ENCODE measurements at regions of chr3 and their contacts with region 1.

Region 1: DNA sequence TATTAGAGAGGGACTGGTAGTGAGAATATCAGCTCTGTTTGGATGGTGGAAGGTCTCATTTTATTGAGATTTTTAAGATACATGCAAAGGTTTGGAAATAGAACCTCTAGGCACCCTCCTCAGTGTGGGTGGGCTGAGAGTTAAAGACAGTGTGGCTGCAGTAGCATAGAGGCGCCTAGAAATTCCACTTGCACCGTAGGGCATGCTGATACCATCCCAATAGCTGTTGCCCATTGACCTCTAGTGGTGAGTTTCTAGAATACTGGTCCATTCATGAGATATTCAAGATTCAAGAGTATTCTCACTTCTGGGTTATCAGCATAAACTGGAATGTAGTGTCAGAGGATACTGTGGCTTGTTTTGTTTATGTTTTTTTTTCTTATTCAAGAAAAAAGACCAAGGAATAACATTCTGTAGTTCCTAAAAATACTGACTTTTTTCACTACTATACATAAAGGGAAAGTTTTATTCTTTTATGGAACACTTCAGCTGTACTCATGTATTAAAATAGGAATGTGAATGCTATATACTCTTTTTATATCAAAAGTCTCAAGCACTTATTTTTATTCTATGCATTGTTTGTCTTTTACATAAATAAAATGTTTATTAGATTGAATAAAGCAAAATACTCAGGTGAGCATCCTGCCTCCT is 87.2 kb downstream of the TGFBR2 start:
- DNase-seq: peak; percentile 16
- ATAC-seq: peak; percentile 98
- H3K4me3 ChIP-seq: no peak overlapping the region
- H3K27ac ChIP-seq: no peak overlapping the region
- H3K4me1 ChIP-seq: no peaks in the 10 kb centered on the region
- H3K27me3 ChIP-seq: no peaks in the 10 kb centered on the region; a peak in 1 of 4 replicates
- CTCF ChIP-seq: peak; percentile 72 to 84 (median 79)
- EP300 ChIP-seq: no peak
- POLR2A ChIP-seq: no peak
- RAD21 ChIP-seq: peak; percentile 98

Region 2: DNA sequence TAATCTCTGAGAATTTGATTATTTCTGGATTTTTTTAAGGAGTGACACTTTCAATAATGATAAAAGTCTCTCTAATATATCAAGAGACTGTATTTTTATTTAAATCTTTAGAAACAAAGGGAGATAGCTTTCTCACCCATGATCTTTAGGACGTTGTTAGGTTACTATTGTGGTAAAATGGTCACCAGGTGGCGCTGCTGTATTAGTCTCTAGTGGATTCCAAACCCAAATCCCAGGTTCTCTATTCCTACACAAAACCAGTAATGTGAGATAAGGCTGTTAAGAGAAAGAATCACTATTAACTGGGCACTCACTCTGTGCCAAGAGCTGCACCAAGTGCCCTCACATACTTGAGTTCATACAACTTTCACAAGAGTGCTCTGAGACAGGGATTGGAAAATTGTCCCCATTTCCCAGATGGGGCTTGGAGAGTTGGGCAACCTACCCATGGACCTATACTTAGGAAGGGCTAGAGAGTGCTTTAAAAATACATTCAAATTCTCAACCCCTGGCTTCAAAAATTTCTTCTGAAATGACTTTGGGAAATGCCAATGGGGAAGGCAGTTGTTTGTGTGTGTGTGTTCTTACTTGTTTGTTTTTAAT is 680.6 kb before region 1 on chr3:
- CTCF ChIA-PET with region 1: interaction called, 6 read pairs
- POLR2A ChIA-PET with region 1: no interaction called
- RAD21 ChIA-PET with region 1: interaction called, 11 read pairs
- SMC1A ChIA-PET with region 1: interaction called, 3 read pairs
- in situ Hi-C with region 1: no loop called
- intact Hi-C with region 1: no loop called
- DNase-seq: peak; percentile 8
- ATAC-seq: peak; percentile 69
- H3K4me3 ChIP-seq: no peak overlapping the region
- H3K27ac ChIP-seq: no peak overlapping the region
- H3K4me1 ChIP-seq: no peaks in the 10 kb centered on the region
- H3K27me3 ChIP-seq: no peaks in the 10 kb centered on the region
- CTCF ChIP-seq: peak; percentile 48 to 61 (median 48)
- EP300 ChIP-seq: no peak
- POLR2A ChIP-seq: no peak
- RAD21 ChIP-seq: peak; percentile 54

Region 3: GRCh38 chr3:30042274-30042859 is 651.2 kb before region 1 on chr3:
- CTCF ChIA-PET with region 1: interaction called, 14 read pairs
- POLR2A ChIA-PET with region 1: no interaction called
- RAD21 ChIA-PET with region 1: interaction called, 11 read pairs
- SMC1A ChIA-PET with region 1: interaction called, 27 read pairs
- in situ Hi-C with region 1: no loop called
- intact Hi-C with region 1: loop called (anchors 1 kb)
- DNase-seq: peak; percentile 1
- ATAC-seq: peak; percentile 88
- H3K4me3 ChIP-seq: no peak overlapping the region
- H3K27ac ChIP-seq: no peak overlapping the region
- H3K4me1 ChIP-seq: no peaks in the 10 kb centered on the region
- H3K27me3 ChIP-seq: no peaks in the 10 kb centered on the region
- CTCF ChIP-seq: peak; percentile 57 to 68 (median 59); a peak in 5 of 6 replicates
- EP300 ChIP-seq: no peak
- POLR2A ChIP-seq: no peak
- RAD21 ChIP-seq: peak; percentile 71

Region 4: GRCh38 chr3:30112902-30113484 is 580.6 kb before region 1 on chr3:
- CTCF ChIA-PET with region 1: interaction called, 11 read pairs
- POLR2A ChIA-PET with region 1: no interaction called
- RAD21 ChIA-PET with region 1: no interaction called
- SMC1A ChIA-PET with region 1: interaction called, 4 read pairs
- in situ Hi-C with region 1: loop called (anchors 10 kb)
- intact Hi-C with region 1: loop called (anchors 1 kb)
- DNase-seq: no peak
- ATAC-seq: peak; percentile 52; the same call in 1 of the 3 replicates
- H3K4me3 ChIP-seq: no peak overlapping the region
- H3K27ac ChIP-seq: no peak overlapping the region
- H3K4me1 ChIP-seq: no peaks in the 10 kb centered on the region
- H3K27me3 ChIP-seq: no peaks in the 10 kb centered on the region
- CTCF ChIP-seq: peak; percentile 16 to 44 (median 39); a peak in 3 of 6 replicates
- EP300 ChIP-seq: no peak
- POLR2A ChIP-seq: no peak
- RAD21 ChIP-seq: peak; percentile 53

Region 5: GRCh38 chr3:30319713-30320112 is 373.9 kb before region 1 on chr3:
- CTCF ChIA-PET with region 1: interaction called, 13 read pairs
- POLR2A ChIA-PET with region 1: no interaction called
- RAD21 ChIA-PET with region 1: interaction called, 3 read pairs
- SMC1A ChIA-PET with region 1: interaction called, 5 read pairs
- in situ Hi-C with region 1: no loop called
- intact Hi-C with region 1: loop called (anchors 2 kb)
- DNase-seq: no peak
- ATAC-seq: peak; percentile 69
- H3K4me3 ChIP-seq: no peak overlapping the region
- H3K27ac ChIP-seq: no peak overlapping the region
- H3K4me1 ChIP-seq: no peaks in the 10 kb centered on the region
- H3K27me3 ChIP-seq: no peaks in the 10 kb centered on the region
- CTCF ChIP-seq: peak in 2 of 3 experiments; percentile 32 to 33; a peak in 3 of 6 replicates
- EP300 ChIP-seq: no peak
- POLR2A ChIP-seq: no peak
- RAD21 ChIP-seq: peak; percentile 46

Region 6: DNA sequence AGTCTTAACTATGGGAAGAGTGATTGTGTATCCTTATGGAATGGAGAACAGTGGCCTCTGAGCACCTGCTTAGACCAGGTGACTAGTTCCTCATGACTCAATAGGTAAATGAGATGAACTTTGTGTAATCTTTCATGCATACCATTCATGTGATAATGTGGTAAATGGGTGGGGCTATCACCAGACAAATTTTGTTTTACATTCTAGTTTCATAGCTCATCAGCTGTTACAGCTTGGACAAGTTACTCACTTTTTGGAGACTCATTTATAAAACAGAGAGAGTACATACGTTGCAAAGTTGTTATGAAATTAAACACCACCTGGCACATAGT is 190.9 kb before region 1 on chr3:
- CTCF ChIA-PET with region 1: no interaction called
- POLR2A ChIA-PET with region 1: no interaction called
- RAD21 ChIA-PET with region 1: no interaction called
- SMC1A ChIA-PET with region 1: no interaction called
- in situ Hi-C with region 1: no loop called
- intact Hi-C with region 1: no loop called
- DNase-seq: peak; percentile 12
- ATAC-seq: peak; percentile 40
- H3K4me3 ChIP-seq: no peak overlapping the region
- H3K27ac ChIP-seq: no peak overlapping the region
- H3K4me1 ChIP-seq: peaks cover 28% of the 10 kb centered on the region
- H3K27me3 ChIP-seq: no peaks in the 10 kb centered on the region
- CTCF ChIP-seq: no peak
- EP300 ChIP-seq: no peak
- POLR2A ChIP-seq: no peak
- RAD21 ChIP-seq: no peak

Region 7: GRCh38 chr3:30658328-30659052 is 35.1 kb before region 1 on chr3:
- CTCF ChIA-PET with region 1: interaction called, 10 read pairs
- POLR2A ChIA-PET with region 1: no interaction called
- RAD21 ChIA-PET with region 1: no interaction called
- SMC1A ChIA-PET with region 1: interaction called, 4 read pairs
- in situ Hi-C with region 1: no loop called
- intact Hi-C with region 1: no loop called
- DNase-seq: peak; percentile 70
- ATAC-seq: peak; percentile 93
- H3K4me3 ChIP-seq: no peak overlapping the region
- H3K27ac ChIP-seq: no peak overlapping the region
- H3K4me1 ChIP-seq: peaks cover 23% of the 10 kb centered on the region
- H3K27me3 ChIP-seq: no peaks in the 10 kb centered on the region
- CTCF ChIP-seq: no peak
- EP300 ChIP-seq: peak; percentile 27 to 48; a peak in 1 of 4 replicates
- POLR2A ChIP-seq: no peak
- RAD21 ChIP-seq: no peak

Region 8: DNA sequence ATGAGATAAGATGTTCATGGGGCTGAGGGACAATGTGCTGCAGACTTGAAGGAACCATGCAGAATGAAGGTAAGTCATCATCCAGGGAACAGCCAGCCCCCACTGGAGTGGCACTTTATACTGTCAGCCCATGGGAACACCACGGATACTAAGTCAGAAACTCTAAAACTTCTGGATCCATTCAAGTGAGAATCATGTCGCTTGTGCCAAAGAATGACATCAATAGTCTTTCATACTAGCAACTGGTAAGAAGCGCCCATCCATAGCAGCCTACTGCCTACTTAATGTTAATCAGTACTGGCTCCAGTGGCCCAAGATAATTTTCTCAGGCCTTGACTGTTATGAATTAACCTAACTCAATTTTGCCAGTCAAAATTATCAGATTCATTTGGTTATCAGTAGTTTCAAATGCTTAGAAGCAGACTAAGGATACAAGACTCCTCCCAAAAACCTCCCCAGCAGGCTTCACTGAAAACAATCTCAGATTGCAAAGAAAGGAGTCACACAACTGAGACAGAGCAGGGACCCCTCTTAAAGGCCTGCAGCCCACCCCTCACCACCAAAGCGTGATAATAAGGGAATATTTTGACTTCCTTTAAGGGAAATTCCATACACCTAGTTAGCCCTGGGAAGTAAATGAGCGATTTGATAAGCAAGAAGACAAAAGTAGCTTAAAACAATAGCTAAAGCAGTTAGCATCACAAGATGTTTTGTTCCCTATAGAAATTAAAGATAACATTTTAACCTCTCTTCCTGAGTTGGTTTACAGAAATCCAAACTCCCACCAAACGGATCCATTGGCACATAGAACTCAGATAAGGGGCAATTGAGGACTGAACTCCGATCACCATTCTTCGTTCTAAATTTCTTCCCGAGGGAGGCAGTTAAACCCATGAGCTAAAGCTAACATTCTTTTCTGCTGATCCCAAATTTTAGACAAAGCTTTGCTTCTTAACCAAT is 11.6 kb after region 1 on chr3:
- CTCF ChIA-PET with region 1: interaction called, 12 read pairs
- POLR2A ChIA-PET with region 1: no interaction called
- RAD21 ChIA-PET with region 1: no interaction called
- SMC1A ChIA-PET with region 1: interaction called, 4 read pairs
- in situ Hi-C with region 1: no loop called
- intact Hi-C with region 1: no loop called
- DNase-seq: no peak
- ATAC-seq: no peak
- H3K4me3 ChIP-seq: no peak overlapping the region
- H3K27ac ChIP-seq: no peak overlapping the region
- H3K4me1 ChIP-seq: no peaks in the 10 kb centered on the region
- H3K27me3 ChIP-seq: no peaks in the 10 kb centered on the region
- CTCF ChIP-seq: no peak
- EP300 ChIP-seq: no peak
- POLR2A ChIP-seq: no peak
- RAD21 ChIP-seq: no peak